ENCODE measurements at regions of chr1 and their contacts with region 1.

Region 1: GRCh38 chr1:64912191-64912590 is 54.2 kb downstream of the JAK1 start:
- DNase-seq: no peak
- H3K4me3 ChIP-seq: no peak overlapping the region
- H3K27ac ChIP-seq: peak overlapping the region; percentile 99
- H3K4me1 ChIP-seq: peaks cover 97% of the 10 kb centered on the region
- H3K27me3 ChIP-seq: no peaks in the 10 kb centered on the region
- CTCF ChIP-seq: no peak

Region 2: GRCh38 chr1:64960731-64961130 is 48.5 kb after region 1 on chr1:
- CTCF ChIA-PET with region 1: no interaction called
- POLR2A ChIA-PET with region 1: interaction called, 3 read pairs
- intact Hi-C with region 1: loop called (anchors 2 kb)
- DNase-seq: no peak
- H3K4me3 ChIP-seq: no peak overlapping the region
- H3K27ac ChIP-seq: peak overlapping the region; percentile 14
- H3K4me1 ChIP-seq: peaks cover 79% of the 10 kb centered on the region
- H3K27me3 ChIP-seq: no peaks in the 10 kb centered on the region
- CTCF ChIP-seq: no peak

Region 3: GRCh38 chr1:64974288-64974825 is 62.2 kb after region 1 on chr1:
- CTCF ChIA-PET with region 1: no interaction called
- POLR2A ChIA-PET with region 1: no interaction called
- intact Hi-C with region 1: no loop called
- DNase-seq: no peak
- H3K4me3 ChIP-seq: no peak overlapping the region
- H3K27ac ChIP-seq: no peak overlapping the region
- H3K4me1 ChIP-seq: peaks cover 8% of the 10 kb centered on the region
- H3K27me3 ChIP-seq: no peaks in the 10 kb centered on the region
- CTCF ChIP-seq: no peak

Region 4: DNA sequence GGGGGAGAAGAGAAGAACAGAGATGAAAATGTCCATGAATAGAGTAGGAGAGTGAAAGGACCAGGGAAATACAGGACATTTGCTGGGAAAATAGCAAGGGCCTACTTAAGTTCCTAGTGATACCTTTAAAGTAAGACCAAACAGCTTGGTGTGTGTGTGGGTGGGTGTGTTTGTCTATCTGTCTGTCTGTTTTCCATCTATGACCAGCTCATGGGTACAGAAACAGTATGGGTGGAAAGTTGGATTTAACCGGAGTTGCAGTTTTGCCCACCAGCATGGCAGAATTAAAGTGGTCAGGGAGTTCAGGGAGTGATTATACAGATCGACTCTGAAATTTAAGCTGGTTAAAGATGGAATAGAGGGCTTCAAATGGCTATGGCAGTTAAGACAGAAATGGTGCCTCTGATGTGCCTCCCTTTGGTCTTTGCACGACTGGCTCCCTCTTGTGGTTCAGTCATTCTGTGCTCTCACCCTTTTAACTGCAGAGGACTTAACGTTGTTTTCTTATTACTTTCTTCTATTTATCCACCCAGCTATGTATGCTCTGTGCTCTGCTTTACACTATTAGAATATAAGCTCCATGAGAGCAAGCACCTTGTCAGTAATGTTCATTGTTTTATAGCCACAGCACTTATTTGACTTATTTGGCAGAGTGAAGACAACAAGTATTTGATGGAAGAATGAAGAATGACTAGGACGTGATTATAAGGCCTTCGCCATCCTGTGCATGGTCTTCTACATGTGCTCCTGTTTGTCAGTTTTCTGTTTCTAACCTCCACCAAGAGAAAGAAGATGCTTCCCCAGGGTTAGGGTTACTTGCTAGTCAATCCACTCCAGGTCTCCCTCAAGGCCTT is 163.2 kb after region 1 on chr1:
- CTCF ChIA-PET with region 1: no interaction called
- POLR2A ChIA-PET with region 1: interaction called, 11 read pairs
- intact Hi-C with region 1: no loop called
- DNase-seq: peak; percentile 86
- H3K4me3 ChIP-seq: no peak overlapping the region
- H3K27ac ChIP-seq: no peak overlapping the region
- H3K4me1 ChIP-seq: peaks cover 3% of the 10 kb centered on the region
- H3K27me3 ChIP-seq: no peaks in the 10 kb centered on the region
- CTCF ChIP-seq: peak; percentile 94